ENCODE measurements at regions of chr3 and their contacts with region 1.

Region 1: GRCh38 chr3:150495563-150496168 is 50.6 kb downstream of the SERP1 start:
- DNase-seq: peak; percentile 5
- H3K4me3 ChIP-seq: no peak overlapping the region
- CTCF ChIP-seq: peak; percentile 34

Region 2: DNA sequence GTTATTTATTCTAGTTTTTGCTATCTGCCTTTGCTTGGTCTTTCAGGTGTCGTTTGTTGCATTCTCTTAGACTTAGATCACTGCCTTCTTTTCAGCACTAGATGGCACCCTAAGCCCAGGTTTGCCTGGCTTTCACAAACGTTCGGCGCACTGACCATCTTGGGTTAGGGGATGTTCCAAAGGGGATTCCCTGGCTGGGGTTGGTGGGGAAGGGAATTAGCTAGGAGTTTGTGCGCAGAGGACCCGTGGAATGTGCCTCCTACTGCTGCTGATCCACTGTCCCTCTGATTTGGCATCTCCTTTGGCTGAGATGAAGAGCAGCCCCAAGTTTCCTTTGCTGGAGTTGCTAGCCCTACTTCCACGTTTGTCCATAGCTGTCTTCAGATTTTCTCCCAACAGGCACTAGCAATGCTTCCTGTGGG is 558.8 kb before region 1 on chr3:
- CTCF ChIA-PET with region 1: interaction called, 37 read pairs
- POLR2A ChIA-PET with region 1: no interaction called
- DNase-seq: no peak
- H3K4me3 ChIP-seq: no peak overlapping the region
- CTCF ChIP-seq: peak; percentile 72

Region 3: GRCh38 chr3:150227839-150228238 is 267.8 kb before region 1 on chr3:
- CTCF ChIA-PET with region 1: interaction called, 88 read pairs
- POLR2A ChIA-PET with region 1: no interaction called
- DNase-seq: no peak
- H3K4me3 ChIP-seq: no peak overlapping the region
- CTCF ChIP-seq: peak; percentile 84

Region 4: GRCh38 chr3:150248116-150248887 is 247.4 kb before region 1 on chr3:
- CTCF ChIA-PET with region 1: interaction called, 10 read pairs
- POLR2A ChIA-PET with region 1: no interaction called
- DNase-seq: peak; percentile 80
- H3K4me3 ChIP-seq: no peak overlapping the region
- CTCF ChIP-seq: no peak

Region 5: DNA sequence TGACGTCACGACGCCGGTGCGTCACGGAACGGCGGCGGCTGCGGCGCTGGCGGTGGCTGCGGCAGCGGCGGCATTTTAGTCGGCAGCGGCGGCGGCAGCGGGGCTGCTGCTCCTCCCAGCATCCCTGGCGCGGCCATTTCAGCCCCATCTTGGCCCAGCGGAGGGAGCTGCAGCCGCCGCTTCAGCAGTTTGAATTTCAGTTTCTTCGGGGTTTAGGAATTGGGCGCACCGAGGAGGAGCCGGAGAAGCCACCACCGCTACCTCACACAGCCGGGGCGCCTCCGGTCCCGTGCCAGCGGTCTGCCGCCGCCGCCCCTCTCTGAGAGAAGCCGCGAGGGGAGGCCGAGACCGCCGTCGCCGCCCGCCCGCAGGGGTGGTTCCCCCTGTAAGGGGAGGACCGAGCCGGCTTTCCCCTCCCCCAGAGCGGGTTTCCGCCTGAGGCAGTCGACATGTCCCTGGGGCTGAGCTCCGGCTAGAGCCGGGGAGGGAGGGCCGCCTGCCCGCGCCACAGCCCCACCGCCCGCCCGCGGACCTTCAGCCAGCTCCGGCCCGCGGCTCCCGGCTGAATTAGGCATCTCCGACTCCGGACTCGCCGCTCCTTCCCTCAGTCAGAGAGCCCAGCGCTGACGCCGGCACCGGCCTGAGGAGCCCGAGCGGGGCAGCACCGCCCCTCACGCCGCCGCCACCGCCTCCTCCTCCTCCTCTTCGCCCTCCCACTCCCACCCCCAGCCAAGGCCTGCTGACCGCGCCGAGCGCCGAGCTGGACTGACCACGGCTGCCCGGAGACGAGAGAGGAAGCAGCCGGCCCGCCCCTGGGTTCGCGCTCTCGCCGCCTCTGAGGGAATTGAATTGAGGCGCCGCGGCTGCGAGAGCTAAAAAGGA is 87.2 kb before region 1 on chr3 and contains the start of gene TSC22D2:
- CTCF ChIA-PET with region 1: interaction called, 15 read pairs
- POLR2A ChIA-PET with region 1: interaction called, 4 read pairs
- DNase-seq: no peak
- H3K4me3 ChIP-seq: peak within 1 kb of the TSS; percentile 97
- CTCF ChIP-seq: peak; percentile 26

Region 6: GRCh38 chr3:150419076-150419868 is 76.4 kb before region 1 on chr3:
- CTCF ChIA-PET with region 1: interaction called, 16 read pairs
- POLR2A ChIA-PET with region 1: no interaction called
- DNase-seq: no peak
- H3K4me3 ChIP-seq: no peak overlapping the region
- CTCF ChIP-seq: no peak

Region 7: DNA sequence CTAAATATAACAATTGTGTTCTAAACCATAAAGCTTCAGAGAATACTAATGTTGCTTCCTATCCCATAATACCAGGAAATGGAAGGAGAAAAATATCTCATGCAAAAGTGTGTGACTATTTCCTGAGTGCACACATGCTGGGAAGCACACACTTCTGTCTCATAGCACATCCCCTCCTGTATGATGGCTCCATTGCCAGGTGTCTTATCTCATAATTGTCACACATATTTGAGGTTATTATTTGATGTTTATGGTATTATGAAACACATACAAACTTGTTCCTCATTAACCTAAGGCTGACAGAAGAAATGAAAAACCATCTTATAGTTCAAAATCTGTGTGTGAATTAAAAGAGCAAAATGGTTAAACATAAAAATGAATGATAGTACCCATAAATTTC is 14.8 kb before region 1 on chr3:
- CTCF ChIA-PET with region 1: interaction called, 27 read pairs
- POLR2A ChIA-PET with region 1: interaction called, 3 read pairs
- DNase-seq: no peak
- H3K4me3 ChIP-seq: no peak overlapping the region
- CTCF ChIP-seq: no peak

Region 8: DNA sequence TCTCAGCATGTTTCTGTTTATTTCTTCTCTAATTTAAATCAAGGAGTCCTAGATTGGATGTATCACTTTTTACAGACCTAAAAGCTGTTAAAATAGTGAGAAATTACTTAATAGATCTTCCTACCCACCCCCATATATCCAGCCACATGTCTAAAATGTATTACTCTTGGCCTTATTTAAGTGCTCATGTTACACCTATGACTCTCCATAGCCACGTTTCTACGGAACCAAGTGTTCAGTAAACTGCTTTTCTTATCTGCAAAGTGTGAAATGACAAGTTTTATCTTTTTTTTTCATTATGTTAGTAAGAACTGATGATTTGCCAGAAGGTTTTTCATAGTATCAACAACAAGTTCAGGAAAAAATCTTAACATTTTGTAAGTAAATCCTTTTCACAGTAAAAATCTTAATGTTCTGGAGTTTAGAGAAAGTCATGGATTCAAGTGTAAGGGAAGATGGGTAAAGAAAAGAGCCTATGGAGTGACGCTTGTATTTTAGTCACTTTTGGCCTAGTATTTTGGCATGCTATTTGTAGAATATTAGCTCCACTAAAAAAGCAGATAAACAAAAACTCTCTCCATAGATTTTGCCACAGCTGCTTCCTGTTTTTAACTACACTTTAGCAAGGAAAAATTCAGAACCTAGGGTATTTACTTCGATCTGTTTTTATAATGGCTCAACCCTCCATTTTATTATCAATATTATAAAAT is 1006.4 kb after region 1 on chr3:
- CTCF ChIA-PET with region 1: no interaction called
- POLR2A ChIA-PET with region 1: no interaction called
- DNase-seq: no peak
- H3K4me3 ChIP-seq: no peak overlapping the region
- CTCF ChIP-seq: no peak